Cardiac septum (tissue), 1 donor: ENCODE measurements at regions of chr18 and their contacts with region 1.

Region 1: DNA sequence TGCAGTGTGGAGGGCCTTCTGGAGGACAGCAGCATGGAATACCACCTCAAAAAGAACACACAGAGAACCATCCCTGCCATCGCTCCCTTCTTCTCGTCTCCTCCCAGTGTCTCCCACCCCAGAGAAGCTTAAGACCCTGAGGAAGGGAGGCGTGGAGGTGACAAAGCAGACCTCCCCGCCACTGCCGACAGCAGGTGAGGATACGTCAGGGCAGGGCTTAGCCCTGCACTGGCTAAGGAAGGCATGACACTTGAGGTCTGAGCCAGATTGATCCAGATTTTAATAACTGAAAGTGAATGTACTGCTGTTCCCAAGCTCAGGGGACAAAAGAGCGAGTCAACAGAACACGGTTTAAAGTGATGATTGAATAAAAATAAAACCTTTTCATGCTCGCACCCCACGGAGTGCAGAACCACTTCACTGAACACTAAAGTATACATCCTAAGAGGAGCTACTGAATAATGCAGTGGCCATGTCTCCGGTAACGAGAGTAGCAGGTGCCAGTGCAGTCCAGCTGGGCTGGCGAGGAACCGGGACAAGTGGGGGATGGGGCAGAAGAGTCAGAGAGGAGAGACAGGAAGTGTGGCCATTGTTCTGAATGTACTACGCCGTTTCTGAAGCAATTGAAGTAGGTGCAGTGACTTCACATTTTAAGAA is 391.0 kb downstream of the CDH2 start:
- DNase-seq: no peak

Region 2: DNA sequence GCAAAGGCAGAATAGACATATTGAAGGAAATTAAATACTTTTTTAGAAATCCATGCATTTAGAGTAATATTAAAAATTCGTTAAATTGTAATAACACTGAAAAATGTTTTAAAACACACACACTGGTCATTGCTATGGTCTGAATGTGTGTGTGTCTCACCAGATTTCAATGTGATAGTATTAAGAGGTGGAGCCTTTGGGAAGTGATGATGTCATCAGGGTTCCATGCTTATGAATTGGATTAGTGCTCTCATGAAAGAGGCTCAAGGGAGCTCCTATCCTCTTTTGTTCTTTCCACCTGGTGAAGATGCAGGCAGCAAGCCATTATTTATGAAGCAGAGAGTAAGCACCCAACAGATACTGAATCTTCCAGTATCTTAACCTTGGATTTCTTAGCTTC is 50.8 kb before region 1 on chr18:
- intact Hi-C with region 1: no loop called
- DNase-seq: no peak

Region 3: GRCh38 chr18:28189400-28190239 is 403.7 kb after region 1 on chr18:
- intact Hi-C with region 1: loop called (anchors 10 kb)
- DNase-seq: no peak